ENCODE measurements at regions of chr2 and their contacts with region 1.

Region 1: DNA sequence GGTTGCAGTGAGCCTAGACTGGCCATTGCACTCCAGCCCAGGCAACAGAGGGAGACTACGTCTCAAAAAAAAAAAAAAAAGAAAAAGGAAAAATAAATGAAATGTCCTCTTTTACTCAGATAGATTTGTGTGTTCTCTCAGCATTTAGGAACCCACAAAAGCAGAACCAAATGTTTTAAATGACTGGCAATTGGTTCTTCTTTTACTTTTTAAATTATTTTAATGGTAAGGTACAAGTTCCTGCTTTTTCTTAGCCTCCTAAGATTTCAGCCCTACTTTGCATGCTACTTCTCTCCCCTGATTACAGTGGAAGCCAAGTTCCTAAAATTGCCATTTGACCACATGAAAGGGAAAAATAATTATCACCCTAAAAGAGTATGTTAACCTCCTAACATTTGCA is 23.5 kb downstream of the SRSF7 start:
- DNase-seq: no peak
- ATAC-seq: no peak
- H3K4me3 ChIP-seq: no peak overlapping the region
- H3K4me1 ChIP-seq: no peaks in the 10 kb centered on the region
- CTCF ChIP-seq: no peak

Region 2: GRCh38 chr2:38744399-38744780 is 16.7 kb after region 1 on chr2:
- intact Hi-C with region 1: loop called in 1 of 2 experiments (anchors 2 kb)
- DNase-seq: no peak
- ATAC-seq: no peak
- H3K4me3 ChIP-seq: no peak overlapping the region
- H3K4me1 ChIP-seq: peaks cover 42% of the 10 kb centered on the region
- CTCF ChIP-seq: no peak

Measured in mucosa of descending colon (tissue), 3 donors.